ENCODE measurements at regions of chr1 and their contacts with region 1.

Region 1: GRCh38 chr1:205335643-205336091 is 14.1 kb upstream of the NUAK2 start:
- DNase-seq: peak; percentile 67 to 97 (median 86)

Region 2: GRCh38 chr1:205430696-205431305 is 95.1 kb after region 1 on chr1:
- intact Hi-C with region 1: loop called (anchors 5 kb)
- DNase-seq: peak; percentile 34 to 94 (median 74)

Region 3: DNA sequence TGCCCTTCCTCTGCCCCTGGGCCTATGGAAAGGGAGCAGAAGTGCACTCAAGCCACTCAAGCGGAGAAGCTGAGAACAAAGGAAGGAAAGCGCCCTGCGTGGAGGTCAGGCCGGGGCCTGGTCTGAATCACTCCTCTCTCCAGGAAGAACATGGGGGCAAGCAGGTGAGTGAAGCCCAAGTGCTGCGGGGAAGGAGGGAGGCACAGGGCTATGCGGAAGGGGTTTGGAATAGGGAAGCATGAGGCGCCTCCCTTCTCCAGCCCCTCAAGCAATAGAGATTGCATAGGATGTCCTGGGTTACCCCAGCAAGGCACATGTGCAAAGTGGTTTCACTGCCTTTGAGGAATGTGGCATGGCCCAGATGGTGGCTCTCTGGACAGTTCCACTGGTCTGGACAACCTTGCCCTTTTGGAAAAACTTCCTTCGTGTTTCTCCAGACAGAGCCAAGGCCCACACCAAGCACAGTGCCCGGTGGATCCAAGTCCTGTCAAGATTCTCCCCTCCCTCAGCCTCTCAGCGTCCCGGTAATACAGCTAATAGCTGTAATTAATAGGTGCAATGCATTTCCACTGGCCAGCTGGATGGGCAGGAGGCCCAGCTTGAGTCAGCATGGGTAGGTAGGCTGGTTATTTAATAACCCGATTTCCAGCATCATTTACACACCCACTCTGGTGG is 106.5 kb after region 1 on chr1:
- intact Hi-C with region 1: no loop called
- DNase-seq: peak in 1 of 10 donors; percentile 79

Region 4: GRCh38 chr1:205840146-205840923 is 504.7 kb after region 1 on chr1:
- intact Hi-C with region 1: no loop called
- DNase-seq: no peak